Tibial artery (tissue), 4 donors: ENCODE measurements at regions of chr13 and their contacts with region 1.

Region 1: DNA sequence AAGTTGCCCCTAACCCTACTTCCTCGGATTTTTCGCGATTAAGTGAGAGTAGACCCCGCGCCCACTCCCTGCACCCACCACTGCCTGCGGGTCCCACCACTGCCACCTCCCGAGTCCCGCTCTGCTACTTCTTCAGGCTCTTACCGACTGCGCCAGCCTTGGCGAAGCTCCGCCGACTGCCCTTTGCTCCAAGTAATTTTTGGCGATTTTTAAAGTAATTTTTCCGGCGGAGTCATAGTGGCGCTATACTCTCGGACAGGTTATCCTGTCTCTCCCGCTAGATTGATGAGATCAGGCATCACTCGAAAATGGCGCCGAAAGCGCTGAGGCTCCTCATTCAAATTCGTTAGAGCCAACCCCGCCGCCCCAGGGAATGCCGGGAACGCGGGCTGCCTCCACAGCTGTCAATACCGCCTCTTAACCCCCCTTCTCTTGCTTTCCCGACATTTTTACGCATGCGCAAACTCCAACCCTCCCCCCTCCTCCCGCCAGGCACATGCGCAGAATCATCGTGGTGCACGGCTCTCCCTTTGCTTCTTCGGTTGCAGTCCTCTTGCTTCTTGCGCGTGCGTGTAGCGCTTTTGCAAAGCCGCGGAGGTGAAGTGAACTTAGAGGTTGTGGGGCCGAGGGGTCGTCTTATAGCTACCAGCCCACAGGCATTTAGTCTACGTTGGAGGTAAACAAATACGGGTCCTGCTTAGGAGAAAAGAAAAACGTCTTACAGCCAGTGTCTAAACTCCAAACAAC is 66.6 kb downstream of the KCNRG start:
- DNase-seq: peak; percentile 98 to 99
- H3K4me3 ChIP-seq: peak overlapping the region; percentile 86 to 95
- H3K27ac ChIP-seq: peak overlapping the region; percentile 96 to 98
- H3K4me1 ChIP-seq: peaks cover 0 to 20% (median 7%) of the 10 kb centered on the region in 4 donors
- H3K27me3 ChIP-seq: no peaks in the 10 kb centered on the region
- CTCF ChIP-seq: no peak

Region 2: GRCh38 chr13:50123862-50124536 is 42.1 kb after region 1 on chr13:
- intact Hi-C with region 1: loop called (anchors 2 kb)
- DNase-seq: peak; percentile 90 to 95
- H3K4me3 ChIP-seq: peak overlapping the region; percentile 95 to 96
- H3K27ac ChIP-seq: peak overlapping the region; percentile 100
- H3K4me1 ChIP-seq: peaks cover 0 to 35% (median 28%) of the 10 kb centered on the region in 4 donors
- H3K27me3 ChIP-seq: no peaks in the 10 kb centered on the region
- CTCF ChIP-seq: no peak